PC-3 (cell line): ENCODE measurements at regions of chr6 and their contacts with region 1.

Region 1: GRCh38 chr6:137013738-137014602 is 30.8 kb downstream of the IL20RA start:
- DNase-seq: peak; percentile 75
- ATAC-seq: peak; percentile 86
- H3K4me3 ChIP-seq: no peak overlapping the region
- H3K27ac ChIP-seq: peak overlapping the region; percentile 75
- H3K4me1 ChIP-seq: peaks cover 27% of the 10 kb centered on the region
- H3K27me3 ChIP-seq: no peaks in the 10 kb centered on the region
- CTCF ChIP-seq: peak; percentile 74

Region 2: DNA sequence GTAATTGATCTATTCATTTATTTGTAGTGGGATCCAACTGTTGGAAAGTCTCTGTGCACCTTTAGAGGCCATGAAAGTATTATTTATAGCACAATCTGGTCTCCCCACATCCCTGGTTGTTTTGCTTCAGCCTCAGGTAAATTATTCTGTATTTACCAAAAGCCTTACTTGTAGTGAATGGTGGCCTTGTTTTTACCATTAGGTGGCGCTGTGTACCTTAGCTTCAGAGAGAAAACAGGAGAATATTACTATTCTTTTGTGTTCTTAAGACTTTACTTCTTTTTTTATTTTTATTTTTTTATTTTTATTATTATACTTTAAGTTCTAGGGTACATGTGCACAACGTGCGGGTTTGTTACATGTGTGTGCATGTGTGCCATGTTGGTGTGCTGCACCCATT is 167.9 kb before region 1 on chr6:
- CTCF ChIA-PET with region 1: no interaction called
- POLR2A ChIA-PET with region 1: no interaction called
- intact Hi-C with region 1: loop called (anchors 1 kb)
- DNase-seq: peak; percentile 64
- ATAC-seq: no peak
- H3K4me3 ChIP-seq: no peak overlapping the region
- H3K27ac ChIP-seq: no peak overlapping the region
- H3K4me1 ChIP-seq: no peaks in the 10 kb centered on the region
- H3K27me3 ChIP-seq: no peaks in the 10 kb centered on the region
- CTCF ChIP-seq: peak; percentile 62

Region 3: DNA sequence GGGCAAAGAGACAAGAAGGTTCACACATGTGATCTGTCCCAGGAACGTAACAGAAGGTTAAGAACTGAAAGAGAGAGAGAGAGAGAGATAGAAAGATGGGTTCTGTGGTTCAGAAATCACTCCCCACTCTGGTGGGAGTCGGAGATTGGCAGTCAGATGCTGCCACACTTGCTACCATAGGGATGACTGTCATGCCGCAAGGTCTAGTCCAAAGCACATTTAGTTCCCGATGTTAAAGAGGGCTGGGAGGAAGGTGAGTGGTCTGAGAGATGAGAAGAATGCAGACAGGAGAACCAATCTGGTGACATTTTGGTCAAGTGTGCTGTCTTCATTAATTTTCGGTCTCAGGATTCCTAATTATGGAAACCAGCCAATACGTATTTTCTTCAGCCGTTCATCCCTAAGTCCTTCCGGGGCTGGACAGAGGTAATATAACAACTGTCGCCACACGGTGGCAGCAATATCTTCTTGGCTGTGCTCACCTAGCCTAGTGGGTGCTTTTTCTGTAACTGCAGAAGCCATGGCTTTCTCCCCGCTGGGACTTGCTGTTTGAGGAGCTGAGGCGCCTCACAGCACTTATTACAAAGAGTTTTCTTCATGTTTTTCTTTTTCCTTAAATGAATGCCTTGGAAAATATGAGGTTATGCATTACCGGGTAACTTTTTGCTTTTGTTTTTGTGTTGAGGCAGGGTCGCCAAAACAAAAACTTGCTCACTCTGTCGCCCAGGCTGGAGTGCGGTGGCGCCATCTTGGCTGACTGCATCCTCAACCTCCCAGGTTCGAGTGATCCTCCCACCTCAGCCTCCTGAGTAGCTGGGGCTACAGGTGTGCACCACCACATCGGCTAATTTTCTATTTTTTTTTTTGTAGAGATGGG is 45.9 kb before region 1 on chr6:
- CTCF ChIA-PET with region 1: no interaction called
- POLR2A ChIA-PET with region 1: interaction called, 3 read pairs
- intact Hi-C with region 1: loop called (anchors 1 kb)
- DNase-seq: peak; percentile 91
- ATAC-seq: peak; percentile 70
- H3K4me3 ChIP-seq: no peak overlapping the region
- H3K27ac ChIP-seq: peak overlapping the region; percentile 96
- H3K4me1 ChIP-seq: peaks cover 22% of the 10 kb centered on the region
- H3K27me3 ChIP-seq: no peaks in the 10 kb centered on the region
- CTCF ChIP-seq: peak; percentile 76

Region 4: GRCh38 chr6:137001299-137001976 is 12.5 kb before region 1 on chr6:
- CTCF ChIA-PET with region 1: interaction called, 4 read pairs
- POLR2A ChIA-PET with region 1: no interaction called
- intact Hi-C with region 1: loop called (anchors 1 kb)
- DNase-seq: peak; percentile 84
- ATAC-seq: peak; percentile 75
- H3K4me3 ChIP-seq: peak overlapping the region; percentile 46; the same call in 1 of the 2 replicates
- H3K27ac ChIP-seq: peak overlapping the region; percentile 96
- H3K4me1 ChIP-seq: peaks cover 33% of the 10 kb centered on the region
- H3K27me3 ChIP-seq: no peaks in the 10 kb centered on the region
- CTCF ChIP-seq: no peak

Region 5: GRCh38 chr6:137025786-137026456 is 12.0 kb after region 1 on chr6:
- CTCF ChIA-PET with region 1: interaction called, 4 read pairs
- POLR2A ChIA-PET with region 1: interaction called, 14 read pairs
- intact Hi-C with region 1: no loop called
- DNase-seq: peak; percentile 80
- ATAC-seq: peak; percentile 42
- H3K4me3 ChIP-seq: peak overlapping the region; percentile 41
- H3K27ac ChIP-seq: peak overlapping the region; percentile 97
- H3K4me1 ChIP-seq: peaks cover 61% of the 10 kb centered on the region
- H3K27me3 ChIP-seq: no peaks in the 10 kb centered on the region
- CTCF ChIP-seq: no peak